Adrenal gland (tissue), 19 donors: ENCODE measurements at regions of chr5 and their contacts with region 1.

Region 1: DNA sequence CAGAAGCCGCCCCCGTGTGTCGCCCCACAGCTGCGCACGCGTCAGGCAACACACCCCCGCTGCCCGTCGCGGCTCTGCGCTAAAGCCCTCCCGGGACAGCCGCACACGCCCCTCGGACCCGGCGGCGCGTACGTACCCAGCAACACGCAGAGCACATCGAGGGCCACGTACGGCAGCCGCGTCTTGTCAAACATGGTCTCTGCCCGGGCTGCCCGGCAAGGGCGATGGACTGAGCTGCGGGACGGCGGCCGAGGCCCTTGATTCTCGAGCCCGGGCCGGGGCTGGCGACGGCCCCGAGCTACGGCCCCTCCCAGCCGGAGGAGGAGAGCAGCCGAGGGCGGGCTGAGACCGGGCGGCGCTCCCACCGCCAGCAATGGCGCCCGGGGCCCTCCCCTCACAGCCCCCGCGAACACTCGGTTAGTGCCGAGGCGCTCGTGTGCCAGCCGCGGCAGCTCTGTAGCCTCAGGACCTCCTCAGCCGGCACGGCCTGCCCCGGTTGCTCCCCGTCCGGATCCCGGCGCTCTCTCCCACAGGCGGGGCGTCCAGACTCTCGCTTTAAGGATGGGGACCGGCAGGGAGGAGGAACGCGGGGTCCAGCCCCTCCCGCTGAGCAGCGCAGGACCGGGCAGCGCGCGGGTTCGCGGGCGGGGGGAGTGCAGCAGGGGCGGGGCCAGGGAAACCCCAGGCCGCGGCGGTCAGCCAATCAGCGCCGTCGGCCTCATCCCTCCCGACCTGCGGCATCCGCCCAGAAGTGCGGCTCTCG is at the start of gene PLPP1:
- DNase-seq: peak; percentile 89 to 95 (median 92)
- H3K4me3 ChIP-seq: peak within 1 kb of the TSS; percentile 68 to 98 (median 83)
- H3K27ac ChIP-seq: peak within 1 kb of the TSS; percentile 56 to 95 (median 91)
- H3K4me1 ChIP-seq: peaks cover 7 to 14% of the 10 kb centered on the region in 2 donors
- H3K27me3 ChIP-seq: no peaks in the 10 kb centered on the region
- CTCF ChIP-seq: peak in 2 of 6 experiments; percentile 2 to 3
- POLR2A ChIP-seq: peak; percentile 79 to 81
- total RNA-seq, gene PLPP1: 55.2 to 716 (median 118) TPM

Region 2: GRCh38 chr5:55680353-55680752 is 145.7 kb after region 1 on chr5:
- intact Hi-C with region 1: loop called in 1 of 2 experiments (anchors 10 kb)
- DNase-seq: no peak
- H3K4me3 ChIP-seq: no peak overlapping the region
- H3K27ac ChIP-seq: peak overlapping the region in 1 of 5 donors; percentile 2
- H3K4me1 ChIP-seq: peaks cover 6 to 18% of the 10 kb centered on the region in 2 donors
- H3K27me3 ChIP-seq: no peaks in the 10 kb centered on the region
- CTCF ChIP-seq: no peak
- POLR2A ChIP-seq: no peak